Testis (tissue), 5 donors: ENCODE measurements at regions of chr17 and their contacts with region 1.

Region 1: DNA sequence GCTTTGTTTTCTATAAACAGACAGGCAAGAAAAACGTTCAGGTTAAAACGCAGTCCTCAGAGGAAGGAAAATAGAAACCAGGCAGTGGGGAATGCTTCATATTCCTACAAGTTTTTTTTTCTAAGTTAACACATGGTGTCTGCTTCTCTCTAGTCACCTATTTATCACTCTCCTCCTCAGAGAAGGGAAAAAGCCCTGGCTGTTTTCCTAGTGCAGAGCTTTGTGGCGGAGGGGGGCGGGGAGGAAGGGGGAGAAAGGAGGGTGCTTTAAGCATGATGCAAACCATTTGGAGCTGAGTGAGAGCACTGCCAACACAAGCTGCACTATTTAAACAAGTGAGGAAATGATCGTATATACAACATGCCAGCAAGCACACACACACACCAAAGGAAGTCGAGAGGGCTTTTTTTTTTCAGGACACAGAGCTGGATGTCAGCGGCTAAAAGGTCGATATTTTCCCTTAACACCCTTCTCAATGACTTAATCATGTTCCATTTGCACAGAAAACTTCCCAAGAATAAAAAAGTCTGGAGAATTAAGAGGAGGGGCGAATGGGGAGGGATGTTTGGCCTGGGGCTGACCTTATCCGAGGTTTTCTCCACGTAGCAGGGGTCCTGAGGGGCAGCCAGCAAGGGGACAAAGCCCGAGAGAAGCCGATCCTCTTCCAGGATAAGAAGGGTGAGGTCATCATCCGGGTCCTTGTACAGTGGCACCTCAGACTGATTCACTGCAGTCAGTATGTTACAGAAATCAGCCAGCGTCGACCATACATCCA is 117.4 kb downstream of the HIC1 start:
- DNase-seq: peak; percentile 61
- H3K4me3 ChIP-seq: no peak overlapping the region
- H3K27ac ChIP-seq: peak overlapping the region in 1 of 2 donors; percentile 59
- H3K4me1 ChIP-seq: peaks cover 48% of the 10 kb centered on the region
- H3K27me3 ChIP-seq: no peaks in the 10 kb centered on the region
- CTCF ChIP-seq: no peak
- POLR2A ChIP-seq: no peak

Region 2: DNA sequence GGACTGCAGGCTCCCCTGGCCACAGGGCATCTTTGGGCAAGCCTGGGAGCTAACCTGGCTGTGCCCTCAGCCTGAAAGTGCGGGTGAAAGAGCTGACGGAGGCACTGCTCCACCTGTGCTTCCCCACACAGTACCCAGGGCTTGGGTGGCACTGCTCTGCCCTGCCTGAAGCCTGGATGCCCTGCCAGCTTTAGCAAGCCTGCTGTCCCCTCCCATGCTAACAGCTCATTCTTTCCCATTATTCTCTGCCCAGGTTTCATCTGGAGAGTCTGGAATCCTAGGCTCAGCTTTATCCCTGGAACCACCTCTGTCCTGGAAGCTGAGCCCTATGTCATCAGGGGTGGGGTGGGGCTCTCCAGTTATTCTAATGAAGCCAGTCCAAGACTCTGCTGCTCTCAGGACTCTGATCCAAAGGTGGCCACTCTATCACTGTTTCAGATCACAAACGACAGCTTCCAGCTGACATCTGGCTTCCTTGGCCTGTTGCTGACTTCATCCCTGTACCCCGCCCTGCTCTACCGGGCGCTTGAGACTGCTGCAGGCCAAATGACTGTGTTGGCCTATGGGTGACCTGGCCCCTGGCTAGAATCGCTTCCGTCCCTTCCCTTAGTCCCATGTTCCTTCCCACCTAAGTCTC is 88.0 kb before region 1 on chr17:
- intact Hi-C with region 1: no loop called
- DNase-seq: peak; percentile 46
- H3K4me3 ChIP-seq: no peak overlapping the region
- H3K27ac ChIP-seq: peak overlapping the region; percentile 35 to 82
- H3K4me1 ChIP-seq: peaks cover 70% of the 10 kb centered on the region
- H3K27me3 ChIP-seq: no peaks in the 10 kb centered on the region
- CTCF ChIP-seq: no peak
- POLR2A ChIP-seq: no peak

Region 3: GRCh38 chr17:2094891-2095535 is 77.3 kb before region 1 on chr17:
- intact Hi-C with region 1: loop called (anchors 10 kb)
- DNase-seq: peak; percentile 58
- H3K4me3 ChIP-seq: no peak overlapping the region
- H3K27ac ChIP-seq: no peak overlapping the region
- H3K4me1 ChIP-seq: peaks cover 8% of the 10 kb centered on the region
- H3K27me3 ChIP-seq: no peaks in the 10 kb centered on the region
- CTCF ChIP-seq: peak; percentile 32 to 60 (median 42)
- POLR2A ChIP-seq: no peak